ENCODE measurements at regions of chr5 and their contacts with region 1.

Region 1: GRCh38 chr5:136062366-136063274 is 33.8 kb downstream of the TGFBI start:
- DNase-seq: no peak
- H3K4me3 ChIP-seq: no peak overlapping the region
- H3K27ac ChIP-seq: peak overlapping the region; percentile 24
- H3K27me3 ChIP-seq: no peaks in the 10 kb centered on the region
- CTCF ChIP-seq: peak; percentile 44

Region 2: GRCh38 chr5:135887351-135887864 is 175.2 kb before region 1 on chr5:
- CTCF ChIA-PET with region 1: interaction called, 28 read pairs
- POLR2A ChIA-PET with region 1: interaction called, 3 read pairs
- DNase-seq: peak; percentile 39
- H3K4me3 ChIP-seq: no peak overlapping the region
- H3K27ac ChIP-seq: no peak overlapping the region
- H3K27me3 ChIP-seq: peaks cover 15% of the 10 kb centered on the region
- CTCF ChIP-seq: peak; percentile 88

Region 3: GRCh38 chr5:135993880-135994636 is 68.6 kb before region 1 on chr5:
- CTCF ChIA-PET with region 1: interaction called, 8 read pairs
- POLR2A ChIA-PET with region 1: interaction called, 19 read pairs
- DNase-seq: peak; percentile 84
- H3K4me3 ChIP-seq: 0 out of 2 replicates have a peak overlapping the region, but pooled peaks have one; percentile 7
- H3K27ac ChIP-seq: peak overlapping the region; percentile 97
- H3K27me3 ChIP-seq: no peaks in the 10 kb centered on the region
- CTCF ChIP-seq: no peak

Region 4: DNA sequence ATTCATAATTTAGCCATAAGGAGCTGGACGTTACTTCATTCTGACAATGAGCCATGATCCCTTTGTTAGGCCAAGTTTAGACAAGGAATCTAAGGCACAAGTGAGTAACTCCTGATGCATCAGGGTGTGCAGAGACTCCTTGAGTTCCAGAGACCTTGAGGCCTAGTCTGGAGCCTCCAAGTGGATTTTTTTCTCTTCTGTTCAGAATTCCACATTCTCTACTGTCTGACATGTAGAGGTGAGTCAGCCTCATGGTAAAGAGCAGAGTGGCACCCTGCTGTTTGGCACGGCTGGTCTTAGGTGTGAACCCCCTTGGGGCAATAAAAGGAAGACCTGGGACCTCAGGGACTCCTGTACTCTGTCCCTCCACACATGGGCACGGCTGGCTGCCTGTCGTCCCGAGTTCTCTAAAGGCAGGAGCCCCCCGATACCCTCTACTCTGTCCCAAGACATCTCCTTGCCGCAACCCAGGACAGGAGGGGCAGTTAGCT is 55.8 kb before region 1 on chr5:
- CTCF ChIA-PET with region 1: interaction called, 12 read pairs
- POLR2A ChIA-PET with region 1: interaction called, 7 read pairs
- DNase-seq: no peak
- H3K4me3 ChIP-seq: no peak overlapping the region
- H3K27ac ChIP-seq: peak overlapping the region; percentile 79
- H3K27me3 ChIP-seq: no peaks in the 10 kb centered on the region
- CTCF ChIP-seq: no peak

Region 5: DNA sequence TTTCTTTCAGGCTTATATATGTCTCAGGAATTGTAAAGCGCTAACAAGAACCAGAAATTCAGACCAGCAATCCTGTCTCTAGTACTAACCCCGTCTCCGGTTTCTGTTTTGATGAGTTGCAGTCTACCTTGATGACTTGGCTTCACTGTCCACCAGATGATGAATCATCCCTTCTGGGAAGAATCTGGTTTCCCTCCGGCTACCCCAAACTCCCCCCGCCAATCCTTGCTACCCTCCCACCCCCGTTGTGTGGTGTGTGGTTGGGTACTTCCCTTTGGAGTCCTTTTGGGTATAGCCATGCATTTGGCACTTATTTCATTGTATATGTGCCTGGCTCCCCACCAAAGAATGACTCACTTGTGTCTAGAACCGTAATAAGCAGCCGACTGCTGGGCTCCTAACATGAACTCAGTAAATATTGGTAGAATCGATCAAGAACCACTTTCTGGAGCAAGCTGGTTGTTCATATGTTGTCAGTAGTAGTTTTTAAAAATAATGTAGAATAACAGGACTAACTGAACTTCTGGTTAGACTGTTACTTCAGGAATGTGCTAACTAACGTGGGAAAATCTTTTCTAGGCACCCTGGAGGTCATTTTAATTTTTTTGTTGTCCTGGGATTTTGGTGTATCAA is 42.1 kb before region 1 on chr5:
- CTCF ChIA-PET with region 1: interaction called, 8 read pairs
- POLR2A ChIA-PET with region 1: interaction called, 12 read pairs
- DNase-seq: peak; percentile 96
- H3K4me3 ChIP-seq: no peak overlapping the region
- H3K27ac ChIP-seq: peak overlapping the region; percentile 98
- H3K27me3 ChIP-seq: no peaks in the 10 kb centered on the region
- CTCF ChIP-seq: no peak

Region 6: DNA sequence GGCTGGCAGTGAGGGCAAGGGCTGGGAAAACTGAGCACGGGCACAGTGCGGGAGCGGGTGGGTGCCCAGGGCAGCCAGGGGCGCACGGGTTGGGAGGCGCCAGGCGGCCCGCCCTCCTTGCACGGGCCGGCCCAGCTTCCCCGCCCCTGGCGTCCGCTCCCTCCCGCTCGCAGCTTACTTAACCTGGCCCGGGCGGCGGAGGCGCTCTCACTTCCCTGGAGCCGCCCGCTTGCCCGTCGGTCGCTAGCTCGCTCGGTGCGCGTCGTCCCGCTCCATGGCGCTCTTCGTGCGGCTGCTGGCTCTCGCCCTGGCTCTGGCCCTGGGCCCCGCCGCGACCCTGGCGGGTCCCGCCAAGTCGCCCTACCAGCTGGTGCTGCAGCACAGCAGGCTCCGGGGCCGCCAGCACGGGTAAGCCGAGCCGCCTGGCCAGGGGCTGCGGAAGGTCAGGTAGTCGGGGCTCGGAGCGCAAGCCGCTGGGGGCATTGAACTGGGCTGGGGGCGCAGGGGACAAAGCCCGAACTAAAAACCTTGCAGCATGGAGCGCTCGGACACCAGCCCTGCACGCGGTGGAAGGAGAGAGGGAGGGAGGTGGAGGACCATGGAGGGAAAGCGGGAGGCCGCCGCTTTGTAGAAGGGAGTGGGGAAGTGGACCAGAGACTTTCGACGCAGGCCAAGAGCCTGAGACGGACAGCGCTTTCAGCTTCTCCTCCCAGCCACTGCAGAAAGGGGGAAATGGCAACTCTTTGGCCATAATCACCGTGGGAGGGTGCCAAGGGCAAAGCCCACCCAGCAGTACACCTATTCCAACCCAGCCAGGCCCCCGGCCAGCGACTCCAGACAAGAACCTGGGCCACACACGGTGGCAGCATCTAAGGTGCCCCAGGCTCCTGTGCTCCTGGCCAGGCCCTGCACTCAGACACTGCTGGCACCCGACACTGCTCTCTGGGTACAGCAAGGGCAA is 33.6 kb before region 1 on chr5 and contains the start of gene TGFBI:
- CTCF ChIA-PET with region 1: interaction called, 11 read pairs
- POLR2A ChIA-PET with region 1: interaction called, 35 read pairs
- DNase-seq: peak; percentile 30
- H3K4me3 ChIP-seq: peak within 1 kb of the TSS; percentile 93
- H3K27ac ChIP-seq: peak within 1 kb of the TSS; percentile 65
- H3K27me3 ChIP-seq: no peaks in the 10 kb centered on the region
- CTCF ChIP-seq: peak; percentile 25; the same call in 1 of the 2 replicates
- polyA plus RNA-seq, gene TGFBI: 2,219 and 2,576 TPM in 2 replicates

Region 7: DNA sequence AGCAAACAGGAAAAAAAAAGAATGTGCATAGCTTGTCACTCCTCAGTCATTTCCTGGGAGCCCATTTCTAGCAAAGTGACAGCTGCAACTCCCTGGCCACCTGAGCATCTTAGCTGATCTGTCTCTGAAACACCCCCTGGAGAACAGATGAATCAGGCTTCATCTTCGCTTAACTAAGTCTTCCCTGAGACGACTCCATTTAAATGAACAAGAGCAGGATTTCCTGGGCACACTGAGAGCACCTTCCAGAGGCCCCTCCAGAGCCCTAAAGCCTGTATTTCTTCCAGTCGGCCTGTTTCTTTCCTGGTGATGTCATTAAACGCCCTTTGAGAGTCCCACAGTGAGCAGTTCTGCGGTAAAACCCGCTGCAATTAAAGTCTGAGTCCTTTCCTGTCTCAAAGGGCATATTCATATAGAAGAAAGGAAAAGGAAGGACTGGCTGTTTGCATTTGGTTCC is 19.9 kb before region 1 on chr5:
- CTCF ChIA-PET with region 1: interaction called, 15 read pairs
- POLR2A ChIA-PET with region 1: interaction called, 5 read pairs
- DNase-seq: no peak
- H3K4me3 ChIP-seq: no peak overlapping the region
- H3K27ac ChIP-seq: peak overlapping the region; percentile 31
- H3K27me3 ChIP-seq: no peaks in the 10 kb centered on the region
- CTCF ChIP-seq: no peak

Measured in AG04450 (cell line).